ENCODE measurements at regions of chr1 and their contacts with region 1.

Region 1: GRCh38 chr1:241998412-241998921 is 431 bp downstream of the MAP1LC3C start:
- H3K4me3 Mint-ChIP-seq: peak overlapping the region; percentile 68
- H3K27ac Mint-ChIP-seq: peak overlapping the region; percentile 77
- H3K4me1 Mint-ChIP-seq: peaks cover 29% of the 10 kb centered on the region
- H3K27me3 Mint-ChIP-seq: peaks cover 19% of the 10 kb centered on the region

Region 2: DNA sequence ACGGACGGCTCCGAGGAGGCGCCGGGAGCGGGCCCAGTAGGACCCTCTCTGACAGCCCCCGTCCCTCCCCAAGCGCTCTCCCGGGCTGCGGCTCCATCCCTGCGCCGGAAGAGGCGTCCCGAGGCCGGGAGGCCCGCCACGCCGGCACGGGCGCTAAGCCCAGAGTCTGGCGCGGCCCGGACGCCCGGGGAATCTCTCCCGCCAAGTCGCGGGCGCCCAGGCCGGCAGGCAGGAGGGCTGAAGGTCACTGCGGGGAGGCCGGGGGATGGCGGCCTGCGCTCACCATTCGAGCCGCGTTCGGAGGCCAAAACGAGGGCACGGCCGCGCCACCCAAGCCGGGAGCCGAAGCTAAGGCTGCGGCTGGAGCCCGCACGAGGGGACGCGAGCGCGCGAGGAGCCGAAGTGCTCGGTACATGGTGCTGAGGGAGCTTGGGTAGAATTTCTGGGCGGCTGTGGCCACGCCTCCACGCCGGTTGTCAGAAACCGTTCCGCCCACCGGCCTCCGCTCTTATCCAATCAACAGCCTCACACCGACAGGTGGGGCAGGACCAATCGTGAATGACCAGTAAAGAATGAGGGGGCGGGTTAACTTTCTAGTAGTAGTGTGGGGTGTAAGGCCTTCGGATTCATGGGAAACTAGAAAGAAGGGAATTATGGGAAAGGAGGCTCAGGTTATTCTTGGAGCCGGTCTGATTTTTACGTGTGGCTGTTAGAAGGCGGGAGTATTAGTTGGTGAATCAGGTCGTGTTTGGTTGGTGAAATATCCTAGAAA is 479.0 kb before region 1 on chr1 and contains the start of gene FH:
- intact Hi-C with region 1: loop called (anchors 10 kb)
- H3K4me3 Mint-ChIP-seq: no peak within 1 kb of the TSS
- H3K27ac Mint-ChIP-seq: no peak within 1 kb of the TSS
- H3K4me1 Mint-ChIP-seq: peaks cover 10% of the 10 kb centered on the region
- H3K27me3 Mint-ChIP-seq: peaks cover 16% of the 10 kb centered on the region

Region 3: GRCh38 chr1:241770115-241770514 is 228.4 kb before region 1 on chr1:
- intact Hi-C with region 1: no loop called
- H3K4me3 Mint-ChIP-seq: no peak overlapping the region
- H3K27ac Mint-ChIP-seq: no peak overlapping the region
- H3K4me1 Mint-ChIP-seq: no peaks in the 10 kb centered on the region
- H3K27me3 Mint-ChIP-seq: peaks cover 12% of the 10 kb centered on the region

Measured in dendritic cell treated with granulocyte-macrophage colony-stimulating factor and Interleukin-4, amounts not matched to agents 40 ng/mL and 50 ng/mL, for 4 days (primary cell).